ENCODE measurements at regions of chr12 and their contacts with region 1.

Region 1: DNA sequence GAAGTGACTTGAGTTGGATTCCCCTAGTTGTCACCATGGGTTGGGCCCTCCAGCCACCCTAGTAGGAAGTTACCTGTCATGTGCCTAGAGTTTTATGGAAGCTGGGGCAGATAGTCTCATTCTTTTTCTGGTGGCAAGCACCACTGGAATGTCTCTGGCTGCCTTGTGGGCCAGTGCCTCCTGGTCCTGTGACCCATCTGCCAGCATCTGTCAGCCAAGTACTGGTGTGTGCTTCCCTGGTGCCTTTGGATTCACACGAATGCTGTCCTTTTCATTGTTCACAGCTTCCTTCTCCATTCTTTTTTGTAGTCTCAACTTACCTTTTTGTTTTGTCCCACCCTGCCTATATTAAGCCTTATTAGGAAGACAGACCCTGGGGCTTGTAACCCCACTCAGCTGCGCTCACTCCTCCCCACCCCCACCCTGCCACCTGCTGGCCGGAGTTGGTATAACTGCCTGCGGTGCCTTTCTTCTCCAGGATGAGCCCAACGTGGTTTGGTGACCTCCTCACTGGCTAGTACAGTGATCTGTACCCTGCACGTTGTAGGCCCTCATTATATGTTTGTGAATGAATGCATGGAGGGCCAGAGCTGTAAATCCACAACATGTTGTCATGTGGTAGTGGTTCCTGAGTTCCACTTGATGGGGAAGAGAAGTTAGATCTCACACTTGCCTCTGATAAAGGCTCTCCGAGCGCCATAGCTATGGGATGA is 125.7 kb downstream of the TSPAN9 start:
- DNase-seq: peak; percentile 76
- ATAC-seq: peak; percentile 62
- H3K4me3 ChIP-seq: no peak overlapping the region
- H3K27ac ChIP-seq: no peak overlapping the region
- H3K4me1 ChIP-seq: peaks cover 34% of the 10 kb centered on the region
- H3K27me3 ChIP-seq: peaks cover 20% of the 10 kb centered on the region
- CTCF ChIP-seq: peak; percentile 89

Region 2: DNA sequence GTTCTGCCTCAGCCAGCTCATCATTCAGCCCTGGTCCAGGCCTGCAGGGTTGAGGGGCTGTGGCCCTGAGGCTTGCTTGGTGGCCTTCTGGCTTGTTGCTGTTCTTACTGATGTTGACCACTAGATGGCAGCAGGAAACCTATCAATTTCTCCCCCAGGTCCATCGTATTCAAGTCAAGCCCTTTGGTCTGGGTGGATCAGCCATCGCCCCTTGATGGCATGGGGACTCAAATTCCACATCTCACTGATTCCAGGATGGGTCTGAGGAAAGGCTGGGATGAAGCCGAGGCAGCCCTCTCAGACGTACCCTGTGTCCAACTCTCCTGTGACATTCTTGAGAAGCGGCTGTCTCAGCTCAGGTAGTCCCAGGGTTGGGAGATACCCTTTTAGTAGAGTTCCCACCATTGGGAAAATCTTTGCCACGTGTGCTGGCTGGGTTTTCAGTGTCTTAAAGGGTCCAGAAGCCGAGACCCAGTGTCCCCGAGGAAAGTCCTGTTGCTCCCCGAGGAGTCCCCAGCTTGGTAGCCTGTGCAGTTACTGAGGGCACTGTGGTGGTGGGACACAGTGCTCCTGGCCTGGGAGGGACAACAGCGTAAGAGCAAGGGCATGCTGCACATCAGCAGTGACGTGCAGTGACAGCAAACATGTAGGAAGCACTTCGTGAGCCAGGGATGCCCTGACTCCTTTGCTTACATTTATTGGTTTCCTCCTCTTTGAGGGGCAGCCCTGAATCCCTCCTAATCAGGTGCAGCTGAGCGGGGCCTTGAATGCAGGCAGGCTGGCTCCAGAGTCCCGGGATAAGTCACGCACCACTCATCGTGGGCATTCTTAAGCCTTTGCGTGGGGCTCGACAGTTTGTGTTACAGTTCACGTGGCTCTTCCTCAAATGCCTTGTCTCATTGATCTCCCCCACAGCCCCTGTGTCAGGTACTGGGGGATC is 67.1 kb before region 1 on chr12:
- intact Hi-C with region 1: loop called (anchors 5 kb)
- DNase-seq: no peak
- ATAC-seq: peak; percentile 72
- H3K4me3 ChIP-seq: no peak overlapping the region
- H3K27ac ChIP-seq: no peak overlapping the region
- H3K4me1 ChIP-seq: peaks cover 46% of the 10 kb centered on the region
- H3K27me3 ChIP-seq: no peaks in the 10 kb centered on the region
- CTCF ChIP-seq: peak; percentile 79

Measured in upper lobe of right lung (tissue), 1 donor.